A673 (cell line): ENCODE measurements at regions of chr18 and their contacts with region 1.

Region 1: GRCh38 chr18:35355140-35355618 is 11.0 kb upstream of the ZNF24 start:
- DNase-seq: peak; percentile 75
- H3K4me3 ChIP-seq: no peak overlapping the region
- H3K27ac ChIP-seq: no peak overlapping the region
- H3K4me1 ChIP-seq: no peaks in the 10 kb centered on the region
- H3K27me3 ChIP-seq: no peaks in the 10 kb centered on the region
- CTCF ChIP-seq: peak; percentile 80

Region 2: GRCh38 chr18:35005963-35006577 is 349.1 kb before region 1 on chr18:
- CTCF ChIA-PET with region 1: interaction called, 3 read pairs
- POLR2A ChIA-PET with region 1: no interaction called
- intact Hi-C with region 1: loop called (anchors 10 kb)
- DNase-seq: peak; percentile 64
- H3K4me3 ChIP-seq: no peak overlapping the region
- H3K27ac ChIP-seq: no peak overlapping the region
- H3K4me1 ChIP-seq: no peaks in the 10 kb centered on the region
- H3K27me3 ChIP-seq: peaks cover 6% of the 10 kb centered on the region
- CTCF ChIP-seq: peak; percentile 64

Region 3: GRCh38 chr18:35231052-35231451 is 124.1 kb before region 1 on chr18:
- CTCF ChIA-PET with region 1: interaction called, 5 read pairs
- POLR2A ChIA-PET with region 1: no interaction called
- intact Hi-C with region 1: loop called (anchors 2 kb)
- DNase-seq: peak; percentile 85
- H3K4me3 ChIP-seq: peak overlapping the region; percentile 30
- H3K27ac ChIP-seq: no peak overlapping the region
- H3K4me1 ChIP-seq: no peaks in the 10 kb centered on the region
- H3K27me3 ChIP-seq: no peaks in the 10 kb centered on the region
- CTCF ChIP-seq: peak; percentile 90

Region 4: GRCh38 chr18:35296060-35296459 is 59.1 kb before region 1 on chr18:
- CTCF ChIA-PET with region 1: no interaction called
- POLR2A ChIA-PET with region 1: interaction called, 25 read pairs
- intact Hi-C with region 1: no loop called
- DNase-seq: no peak
- H3K4me3 ChIP-seq: no peak overlapping the region
- H3K27ac ChIP-seq: no peak overlapping the region
- H3K4me1 ChIP-seq: peaks cover 4% of the 10 kb centered on the region
- H3K27me3 ChIP-seq: no peaks in the 10 kb centered on the region
- CTCF ChIP-seq: no peak